Left cardiac atrium (tissue), 4 donors: ENCODE measurements at regions of chr14 and their contacts with region 1.

Region 1: GRCh38 chr14:102591889-102592763 is at the start of gene RCOR1:
- DNase-seq: peak; percentile 99
- ATAC-seq: peak; percentile 94 to 95
- total RNA-seq, gene RCOR1: 11.3 to 14.9 TPM

Region 2: GRCh38 chr14:102524466-102525218 is 67.5 kb before region 1 on chr14:
- intact Hi-C with region 1: loop called in 1 of 2 experiments (anchors 5 kb)
- DNase-seq: peak; percentile 100
- ATAC-seq: peak; percentile 99